ENCODE measurements at regions of chr11 and their contacts with region 1.

Region 1: DNA sequence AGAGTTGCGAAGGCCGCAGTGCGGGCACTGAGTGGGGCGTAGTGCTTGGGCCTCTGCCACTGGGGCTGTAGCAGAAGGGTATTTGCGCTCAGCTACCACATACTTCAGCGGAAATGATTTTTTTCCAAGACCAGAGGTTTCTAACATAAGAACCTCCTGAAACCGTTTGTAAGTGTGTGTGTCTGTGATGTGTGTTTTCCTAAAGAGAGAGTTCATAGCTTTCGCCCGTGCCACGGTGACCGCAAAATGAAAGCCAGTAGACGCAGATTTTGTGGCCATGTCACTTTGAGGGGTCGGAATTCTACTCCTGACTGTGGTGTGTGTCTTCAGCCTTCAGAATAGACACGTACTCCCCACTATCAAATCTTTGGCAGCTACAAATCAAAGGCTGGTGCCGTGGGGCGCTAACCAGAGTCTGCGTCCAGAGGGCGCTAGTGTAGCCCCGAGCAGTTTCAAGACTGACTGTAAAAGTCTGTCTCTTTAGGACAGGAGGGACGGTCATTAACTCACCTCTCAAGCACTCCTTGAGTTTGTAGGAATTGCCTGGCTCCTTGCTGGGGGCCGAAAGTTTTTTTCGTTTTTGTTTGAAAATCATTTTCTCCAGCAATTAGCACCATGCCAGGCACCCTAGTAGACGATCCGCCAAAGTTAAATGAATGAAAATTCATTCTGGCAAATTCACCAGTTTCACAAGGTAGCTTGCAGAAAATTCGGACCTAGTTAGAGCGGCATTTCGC is 2.5 kb upstream of the CALCA start:
- DNase-seq: peak; percentile 26 to 71 (median 57)
- ATAC-seq: peak; percentile 74
- H3K4me3 ChIP-seq: peak overlapping the region; percentile 32 to 59
- H3K4me3 Mint-ChIP-seq: peak overlapping the region; percentile 83
- H3K27ac ChIP-seq: no peak overlapping the region
- H3K27ac Mint-ChIP-seq: no peak overlapping the region
- H3K4me1 ChIP-seq: peaks cover 29% of the 10 kb centered on the region
- H3K4me1 Mint-ChIP-seq: peaks cover 31% of the 10 kb centered on the region
- H3K27me3 ChIP-seq: peaks cover 12 to 22% of the 10 kb centered on the region in 2 experiments
- H3K27me3 Mint-ChIP-seq: peaks cover 68% of the 10 kb centered on the region
- CTCF ChIP-seq: peak; percentile 63

Region 2: DNA sequence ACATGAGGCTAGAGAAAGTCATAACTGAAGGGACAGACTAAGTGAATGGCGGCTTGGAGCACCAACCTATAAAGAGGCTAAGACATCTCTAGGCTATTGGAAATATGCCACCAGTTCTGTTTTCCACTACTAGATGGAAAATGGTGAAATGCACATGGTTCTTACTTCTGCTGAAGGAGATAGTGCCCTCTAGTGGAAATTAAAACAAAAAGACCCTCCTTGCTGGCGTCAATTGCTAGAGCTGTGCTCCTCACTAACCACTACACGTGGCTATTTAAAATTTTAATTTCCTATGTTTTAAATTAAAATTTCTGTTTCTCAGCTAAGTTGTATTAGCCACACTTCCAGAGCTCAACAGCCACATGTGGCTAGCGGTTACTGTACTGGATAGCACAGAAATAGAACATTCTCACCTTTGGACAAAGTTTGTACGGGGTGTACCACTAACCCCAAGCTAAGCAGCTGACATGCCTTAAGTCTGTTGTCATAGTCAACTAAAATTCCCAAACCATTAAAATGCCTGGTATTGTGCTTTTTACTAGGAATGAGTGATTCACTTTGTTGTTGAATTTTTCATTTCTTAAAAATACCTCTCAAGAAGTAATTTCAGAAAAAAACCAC is 31.6 kb after region 1 on chr11:
- CTCF ChIA-PET with region 1: interaction called, 12 read pairs
- POLR2A ChIA-PET with region 1: no interaction called
- intact Hi-C with region 1: loop called in 1 of 2 experiments (anchors 2 kb)
- DNase-seq: peak in 3 of 9 experiments; percentile 13 to 61 (median 50)
- ATAC-seq: peak; percentile 34
- H3K4me3 ChIP-seq: no peak overlapping the region
- H3K4me3 Mint-ChIP-seq: no peak overlapping the region
- H3K27ac ChIP-seq: no peak overlapping the region
- H3K27ac Mint-ChIP-seq: no peak overlapping the region
- H3K4me1 ChIP-seq: no peaks in the 10 kb centered on the region
- H3K4me1 Mint-ChIP-seq: no peaks in the 10 kb centered on the region
- H3K27me3 ChIP-seq: no peaks in the 10 kb centered on the region
- H3K27me3 Mint-ChIP-seq: peaks cover 34% of the 10 kb centered on the region
- CTCF ChIP-seq: peak; percentile 56

Region 3: DNA sequence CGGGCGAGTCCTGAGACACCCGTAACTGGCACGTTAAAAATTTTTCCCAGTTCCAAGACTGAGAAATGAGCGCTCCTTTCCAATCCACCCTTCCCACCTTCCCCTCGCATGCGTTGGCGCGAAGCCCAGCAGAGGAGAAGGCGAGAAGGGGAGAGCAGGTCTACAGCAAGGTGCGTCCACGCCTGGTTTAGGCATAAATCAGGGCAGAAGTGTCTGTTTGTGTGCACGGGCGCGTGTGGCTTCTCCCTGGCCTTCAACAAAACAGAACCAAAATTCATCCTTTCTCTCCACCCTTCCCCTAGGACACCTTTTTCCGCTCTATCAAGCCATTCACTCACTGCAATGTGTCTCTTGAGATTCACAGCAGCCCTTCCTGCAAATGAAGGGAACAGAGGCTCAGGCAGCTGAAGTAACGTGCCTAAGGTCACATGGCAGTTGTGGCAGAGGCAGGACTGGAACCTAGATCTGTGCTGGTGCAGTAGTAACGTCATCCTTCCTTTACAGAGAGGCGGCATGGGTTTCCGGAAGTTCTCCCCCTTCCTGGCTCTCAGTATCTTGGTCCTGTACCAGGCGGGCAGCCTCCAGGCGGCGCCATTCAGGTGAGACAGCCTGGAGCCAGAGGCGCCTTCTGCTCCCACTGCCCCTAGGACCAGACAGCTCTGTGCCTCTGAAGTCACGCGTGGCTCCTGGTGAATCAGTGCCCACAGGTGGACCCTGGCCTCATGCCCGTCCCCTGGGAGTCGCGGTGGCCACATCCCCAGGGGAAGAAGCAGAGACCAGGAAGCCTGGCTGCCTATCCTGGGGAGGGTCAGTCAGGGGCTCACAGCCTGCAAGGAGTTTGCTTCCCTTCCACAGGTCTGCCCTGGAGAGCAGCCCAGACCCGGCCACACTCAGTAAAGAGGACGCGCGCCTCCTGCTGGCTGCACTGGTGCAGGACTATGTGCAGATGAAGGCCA is 99.8 kb after region 1 on chr11:
- CTCF ChIA-PET with region 1: interaction called, 3 read pairs
- POLR2A ChIA-PET with region 1: no interaction called
- intact Hi-C with region 1: loop called (anchors 1 to 2 kb)
- DNase-seq: peak; percentile 64 to 89 (median 80)
- ATAC-seq: peak; percentile 91
- H3K4me3 ChIP-seq: peak overlapping the region; percentile 39 to 60
- H3K4me3 Mint-ChIP-seq: peak overlapping the region; percentile 84
- H3K27ac ChIP-seq: no peak overlapping the region
- H3K27ac Mint-ChIP-seq: no peak overlapping the region
- H3K4me1 ChIP-seq: peaks cover 18% of the 10 kb centered on the region
- H3K4me1 Mint-ChIP-seq: peaks cover 12% of the 10 kb centered on the region
- H3K27me3 ChIP-seq: peaks cover 9 to 16% of the 10 kb centered on the region in 2 experiments
- H3K27me3 Mint-ChIP-seq: peaks cover 27% of the 10 kb centered on the region
- CTCF ChIP-seq: peak; percentile 79

Measured in CD8-positive, alpha-beta T cell (primary cell).